A549 (cell line): ENCODE measurements at regions of chr1 and their contacts with region 1.

Region 1: DNA sequence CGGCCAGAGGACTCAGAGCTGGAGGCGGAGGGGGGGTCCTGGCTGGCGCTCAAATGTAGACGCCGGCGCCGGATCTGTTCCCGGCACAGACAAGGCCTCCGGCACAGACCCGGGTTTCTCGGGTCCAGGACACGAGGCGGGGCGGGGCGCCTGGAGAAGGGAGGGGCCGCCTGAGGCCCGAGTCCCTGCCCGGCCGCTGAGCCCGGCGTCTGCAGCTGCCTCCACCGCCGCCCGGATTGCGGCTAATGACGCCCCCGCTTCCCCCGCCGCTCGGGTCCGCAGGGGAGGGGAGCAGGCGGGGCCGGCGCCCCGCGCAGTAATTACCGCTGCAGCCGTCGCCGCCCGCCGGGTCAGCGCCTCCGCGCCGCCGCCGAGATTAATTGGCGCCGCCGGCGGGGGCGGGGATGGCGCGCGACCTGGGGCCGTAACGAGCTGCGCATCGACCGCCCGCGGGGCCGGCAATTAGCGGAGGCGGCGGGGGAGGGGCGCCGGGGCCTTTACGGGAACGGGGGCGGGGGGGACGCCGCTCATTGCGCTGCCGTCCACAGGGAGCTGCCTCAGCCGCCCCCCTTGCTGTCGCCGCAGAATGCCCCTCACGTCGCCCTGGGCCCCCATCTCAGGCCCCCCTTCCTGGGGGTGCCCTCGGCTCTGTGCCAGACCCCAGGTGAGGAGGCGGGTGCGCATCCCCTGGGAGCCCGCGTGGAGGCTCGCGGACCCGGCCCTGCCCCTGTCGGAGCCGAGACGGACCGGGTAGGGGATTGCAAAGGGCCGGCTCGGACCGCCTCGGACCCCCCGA is 17.3 kb downstream of the NOC2L start:
- DNase-seq: peak; percentile 77 to 90
- ATAC-seq: peak; percentile 5 to 47; a peak in 5 of 6 replicates
- H3K4me3 ChIP-seq: peak overlapping the region; percentile 71
- H3K27ac ChIP-seq: peak overlapping the region; percentile 100
- H3K4me1 ChIP-seq: peaks cover 78% of the 10 kb centered on the region
- CTCF ChIP-seq: no peak
- EP300 ChIP-seq: peak; percentile 49 to 75; a peak in 3 of 5 replicates
- POLR2A ChIP-seq: 0 out of 2 replicates have a peak, but pooled peaks have one; percentile 19
- RAD21 ChIP-seq: no peak

Region 2: GRCh38 chr1:904310-904950 is 37.4 kb before region 1 on chr1:
- CTCF ChIA-PET with region 1: interaction called, 53 read pairs
- POLR2A ChIA-PET with region 1: no interaction called
- DNase-seq: peak in 1 of 2 experiments; percentile 77
- ATAC-seq: peak; percentile 76 to 82
- H3K4me3 ChIP-seq: peak overlapping the region; percentile 52
- H3K27ac ChIP-seq: peak overlapping the region; percentile 93
- H3K4me1 ChIP-seq: peaks cover 37% of the 10 kb centered on the region
- CTCF ChIP-seq: peak; percentile 72
- EP300 ChIP-seq: no peak
- POLR2A ChIP-seq: peak; percentile 32
- RAD21 ChIP-seq: peak; percentile 64 to 86

Region 3: GRCh38 chr1:912740-913301 is 29.0 kb before region 1 on chr1:
- CTCF ChIA-PET with region 1: interaction called, 47 read pairs
- POLR2A ChIA-PET with region 1: no interaction called
- DNase-seq: peak; percentile 52 to 77
- ATAC-seq: peak; percentile 70 to 84
- H3K4me3 ChIP-seq: no peak overlapping the region
- H3K27ac ChIP-seq: peak overlapping the region in 1 of 2 experiments; percentile 89; a peak in 3 of 6 replicates
- H3K4me1 ChIP-seq: peaks cover 49% of the 10 kb centered on the region
- CTCF ChIP-seq: no peak
- EP300 ChIP-seq: no peak
- POLR2A ChIP-seq: no peak
- RAD21 ChIP-seq: 0 out of 5 replicates have a peak, but pooled peaks of 1 of the 2 experiments have one; percentile 9

Region 4: GRCh38 chr1:921011-921837 is 20.6 kb before region 1 on chr1:
- CTCF ChIA-PET with region 1: interaction called, 84 read pairs
- POLR2A ChIA-PET with region 1: interaction called, 3 read pairs
- DNase-seq: peak; percentile 63 to 71
- ATAC-seq: peak; percentile 46 to 69
- H3K4me3 ChIP-seq: peak overlapping the region; percentile 29; the same call in 2 of the 3 replicates
- H3K27ac ChIP-seq: peak overlapping the region; percentile 70 to 97; a peak in 5 of 6 replicates
- H3K4me1 ChIP-seq: peaks cover 51% of the 10 kb centered on the region
- CTCF ChIP-seq: peak; percentile 9; the same call in 1 of the 3 replicates
- EP300 ChIP-seq: no peak; a peak in 1 of 5 replicates
- POLR2A ChIP-seq: no peak; the same call in 1 of the 2 replicates
- RAD21 ChIP-seq: 0 out of 5 replicates have a peak, but pooled peaks of 1 of the 2 experiments have one; percentile 20

Region 5: GRCh38 chr1:966611-967300 is 25.0 kb after region 1 on chr1:
- CTCF ChIA-PET with region 1: interaction called, 3 read pairs
- POLR2A ChIA-PET with region 1: interaction called, 10 read pairs
- DNase-seq: peak; percentile 56 to 65
- ATAC-seq: peak; percentile 74 to 90
- H3K4me3 ChIP-seq: peak overlapping the region; percentile 70
- H3K27ac ChIP-seq: peak overlapping the region; percentile 94 to 96
- H3K4me1 ChIP-seq: peaks cover 13% of the 10 kb centered on the region
- CTCF ChIP-seq: no peak
- EP300 ChIP-seq: no peak
- POLR2A ChIP-seq: peak; percentile 44
- RAD21 ChIP-seq: no peak

Region 6: DNA sequence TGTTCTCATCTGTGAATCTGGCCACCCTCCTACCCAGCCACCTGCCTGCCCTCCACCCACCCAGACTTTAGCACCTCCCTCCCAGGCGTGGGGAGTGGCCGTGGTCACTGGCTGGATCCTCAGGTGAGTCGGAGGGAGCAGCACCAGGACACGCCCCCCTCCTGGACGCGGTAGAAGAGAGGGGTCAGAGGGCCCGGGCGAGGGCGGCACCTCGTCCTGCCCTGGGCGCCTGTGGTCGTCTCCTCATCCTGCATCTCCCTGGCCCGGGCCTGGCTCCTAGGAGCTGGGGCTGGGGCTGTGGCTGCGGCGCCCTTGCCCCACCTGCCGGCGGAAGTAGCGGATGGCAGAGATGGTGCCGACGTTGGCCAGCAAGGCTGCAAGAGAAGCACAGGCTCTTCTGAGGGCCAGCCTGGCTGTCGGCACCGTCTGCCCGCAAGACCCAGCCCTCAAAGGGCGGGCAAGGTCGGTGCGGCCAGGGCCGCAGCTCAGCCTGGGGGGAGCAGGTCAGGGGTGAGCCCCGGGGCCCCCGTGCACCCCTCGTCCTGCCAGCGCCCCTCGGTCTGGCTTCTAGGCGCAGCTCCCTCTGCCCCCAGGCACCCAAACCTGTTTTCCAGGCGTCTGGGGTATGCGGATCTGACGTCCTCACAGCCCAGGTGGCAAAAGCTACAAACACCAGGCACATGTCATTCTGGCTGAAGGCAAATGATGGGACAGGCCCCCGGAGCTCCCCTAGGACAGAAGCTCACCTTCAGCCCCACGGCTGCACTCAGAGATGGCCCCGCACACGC is 34.3 kb after region 1 on chr1:
- CTCF ChIA-PET with region 1: interaction called, 26 read pairs
- POLR2A ChIA-PET with region 1: interaction called, 7 read pairs
- DNase-seq: peak; percentile 80 to 84
- ATAC-seq: peak; percentile 82 to 94
- H3K4me3 ChIP-seq: peak overlapping the region; percentile 38
- H3K27ac ChIP-seq: peak overlapping the region; percentile 69 to 90
- H3K4me1 ChIP-seq: peaks cover 7% of the 10 kb centered on the region; the same call in 1 of the 3 replicates
- CTCF ChIP-seq: peak; percentile 35; the same call in 2 of the 3 replicates
- EP300 ChIP-seq: no peak
- POLR2A ChIP-seq: no peak
- RAD21 ChIP-seq: peak; percentile 52 to 54

Region 7: DNA sequence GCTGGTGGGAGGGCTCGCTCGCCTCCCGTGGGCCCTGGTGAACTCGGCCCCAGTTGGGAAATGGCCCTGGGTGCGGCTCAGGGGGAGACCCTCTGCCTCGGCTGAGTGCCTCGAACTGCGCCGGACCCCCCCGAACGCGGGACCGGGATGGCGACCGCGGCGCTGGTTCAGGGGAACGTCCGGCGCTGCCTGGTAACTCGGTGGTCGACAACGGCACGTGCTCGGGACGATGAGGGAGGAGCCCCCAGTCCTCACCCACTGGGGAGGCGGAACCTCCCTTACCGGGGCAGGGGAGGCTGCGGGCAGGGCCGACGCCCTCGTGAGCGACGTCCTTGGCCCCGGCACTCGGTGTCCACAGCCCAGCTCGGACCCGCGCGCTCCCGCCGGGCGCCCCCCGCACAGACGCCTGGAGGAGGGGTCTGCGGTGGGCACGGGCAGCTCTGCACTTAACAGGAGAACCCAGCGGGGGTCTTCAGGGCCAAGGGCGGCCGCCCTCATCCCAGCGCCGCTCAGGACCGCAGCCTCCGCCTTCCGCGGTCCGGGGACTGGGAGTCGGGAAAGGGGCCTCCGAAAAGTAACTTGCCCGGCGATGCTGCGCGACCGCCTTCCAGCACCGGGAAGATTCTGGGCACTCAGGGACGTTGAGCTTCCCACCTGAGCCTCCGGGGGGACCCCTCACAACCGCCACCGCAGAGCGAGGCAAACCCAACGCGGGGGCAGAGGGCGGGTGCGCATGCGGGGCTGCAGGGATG is 56.4 kb after region 1 on chr1:
- CTCF ChIA-PET with region 1: no interaction called
- POLR2A ChIA-PET with region 1: no interaction called
- DNase-seq: no peak
- ATAC-seq: no peak
- H3K4me3 ChIP-seq: peak overlapping the region; percentile 77
- H3K27ac ChIP-seq: peak overlapping the region in 1 of 2 experiments; percentile 100; a peak in 4 of 6 replicates
- H3K4me1 ChIP-seq: peaks cover 14% of the 10 kb centered on the region
- CTCF ChIP-seq: no peak
- EP300 ChIP-seq: no peak
- POLR2A ChIP-seq: no peak
- RAD21 ChIP-seq: no peak